ENCODE measurements at regions of chr2 and their contacts with region 1.

Region 1: GRCh38 chr2:11124503-11125068 is 30.7 kb upstream of the SLC66A3 start:
- DNase-seq: peak; percentile 92
- H3K4me3 ChIP-seq: no peak overlapping the region; a peak in 1 of 4 replicates
- H3K27ac ChIP-seq: no peak overlapping the region
- H3K4me1 ChIP-seq: peaks cover 0 to 2% of the 10 kb centered on the region in 2 experiments; a peak in 1 of 4 replicates
- H3K27me3 ChIP-seq: no peaks in the 10 kb centered on the region
- CTCF ChIP-seq: peak; percentile 97
- EP300 ChIP-seq: no peak
- RAD21 ChIP-seq: peak; percentile 95

Region 2: DNA sequence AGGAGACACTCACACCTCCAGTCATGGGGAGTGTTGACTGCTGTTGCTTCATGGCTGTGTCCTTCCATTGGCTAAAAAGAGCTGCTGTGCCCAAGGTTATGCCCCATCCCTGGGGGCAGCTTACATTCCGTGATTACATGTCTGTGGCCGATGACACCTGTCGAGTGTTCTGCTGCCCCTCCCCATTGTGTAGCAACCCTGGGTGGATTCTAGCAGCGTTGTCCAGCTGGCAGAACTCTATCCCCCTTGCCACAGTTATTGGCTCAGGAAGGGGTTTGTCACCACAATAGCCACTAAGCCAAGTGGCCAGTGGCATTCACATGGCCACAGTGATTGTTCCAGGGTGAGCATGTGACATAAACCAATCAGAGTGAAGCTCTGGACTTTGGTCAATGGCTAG is 300.4 kb before region 1 on chr2:
- CTCF ChIA-PET with region 1: interaction called, 666 read pairs
- POLR2A ChIA-PET with region 1: no interaction called
- DNase-seq: no peak
- H3K4me3 ChIP-seq: no peak overlapping the region
- H3K27ac ChIP-seq: no peak overlapping the region
- H3K4me1 ChIP-seq: peaks cover 0 to 5% of the 10 kb centered on the region in 2 experiments; a peak in 1 of 4 replicates
- H3K27me3 ChIP-seq: peaks cover 60% of the 10 kb centered on the region; the same call in 1 of the 2 replicates
- CTCF ChIP-seq: no peak
- EP300 ChIP-seq: no peak
- RAD21 ChIP-seq: no peak

Region 3: DNA sequence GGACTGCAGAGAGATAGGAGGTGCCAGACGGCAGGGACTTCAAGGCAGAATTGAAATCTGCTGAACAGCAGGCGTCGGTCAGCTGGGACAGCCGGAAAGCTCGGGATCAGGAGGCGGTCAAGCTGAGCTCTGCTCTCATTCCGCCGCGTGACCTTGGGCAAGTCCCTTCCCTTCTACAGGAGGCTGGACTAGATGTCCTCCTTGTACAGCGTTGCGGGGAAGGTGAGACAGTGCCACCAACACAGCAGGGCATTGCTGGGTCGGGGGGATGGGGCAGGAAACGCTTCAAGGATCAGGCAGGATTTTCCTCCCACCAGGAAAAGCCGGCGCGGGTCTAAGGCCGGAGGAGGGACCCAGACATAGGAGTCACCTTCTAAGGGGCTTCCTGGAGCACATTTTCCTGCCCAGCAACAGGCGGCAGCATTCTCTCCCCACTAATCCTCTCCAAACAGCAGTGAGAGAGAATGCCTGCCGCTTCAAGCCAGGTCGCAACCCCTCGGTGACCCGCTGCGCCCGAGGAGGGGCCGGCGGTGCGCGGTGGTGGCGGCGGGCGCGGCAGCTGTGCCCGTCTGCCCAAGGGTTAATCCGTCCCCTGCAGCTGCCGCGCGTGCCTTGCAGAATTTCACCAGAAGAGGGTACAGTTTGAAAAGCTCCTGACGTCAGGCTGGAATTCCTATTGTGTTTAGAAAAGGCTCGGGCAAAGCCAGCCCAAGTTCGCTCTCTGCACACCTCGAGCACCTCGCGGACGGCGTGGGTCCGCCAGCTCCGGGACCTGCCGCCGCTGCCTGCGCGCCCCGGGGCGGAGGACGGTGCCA is 213.1 kb before region 1 on chr2 and contains the start of gene KCNF1:
- CTCF ChIA-PET with region 1: interaction called, 94 read pairs
- POLR2A ChIA-PET with region 1: no interaction called
- DNase-seq: peak; percentile 90
- H3K4me3 ChIP-seq: peak within 1 kb of the TSS; percentile 51 to 63
- H3K27ac ChIP-seq: no peak within 1 kb of the TSS
- H3K4me1 ChIP-seq: peaks cover 0 to 12% of the 10 kb centered on the region in 2 experiments; a peak in 1 of 4 replicates
- H3K27me3 ChIP-seq: peaks cover 14% of the 10 kb centered on the region; the same call in 1 of the 2 replicates
- CTCF ChIP-seq: peak; percentile 56
- EP300 ChIP-seq: no peak
- RAD21 ChIP-seq: peak; percentile 41
- polyA plus RNA-seq, gene KCNF1: 0.16 and 0.23 TPM in 2 replicates

Region 4: GRCh38 chr2:10931710-10932255 is 192.8 kb before region 1 on chr2:
- CTCF ChIA-PET with region 1: interaction called, 16 read pairs
- POLR2A ChIA-PET with region 1: no interaction called
- DNase-seq: no peak
- H3K4me3 ChIP-seq: no peak overlapping the region
- H3K27ac ChIP-seq: no peak overlapping the region
- H3K4me1 ChIP-seq: peaks cover 14 to 37% of the 10 kb centered on the region in 2 experiments; a peak in 3 of 4 replicates
- H3K27me3 ChIP-seq: no peaks in the 10 kb centered on the region
- CTCF ChIP-seq: no peak
- EP300 ChIP-seq: no peak
- RAD21 ChIP-seq: no peak

Region 5: DNA sequence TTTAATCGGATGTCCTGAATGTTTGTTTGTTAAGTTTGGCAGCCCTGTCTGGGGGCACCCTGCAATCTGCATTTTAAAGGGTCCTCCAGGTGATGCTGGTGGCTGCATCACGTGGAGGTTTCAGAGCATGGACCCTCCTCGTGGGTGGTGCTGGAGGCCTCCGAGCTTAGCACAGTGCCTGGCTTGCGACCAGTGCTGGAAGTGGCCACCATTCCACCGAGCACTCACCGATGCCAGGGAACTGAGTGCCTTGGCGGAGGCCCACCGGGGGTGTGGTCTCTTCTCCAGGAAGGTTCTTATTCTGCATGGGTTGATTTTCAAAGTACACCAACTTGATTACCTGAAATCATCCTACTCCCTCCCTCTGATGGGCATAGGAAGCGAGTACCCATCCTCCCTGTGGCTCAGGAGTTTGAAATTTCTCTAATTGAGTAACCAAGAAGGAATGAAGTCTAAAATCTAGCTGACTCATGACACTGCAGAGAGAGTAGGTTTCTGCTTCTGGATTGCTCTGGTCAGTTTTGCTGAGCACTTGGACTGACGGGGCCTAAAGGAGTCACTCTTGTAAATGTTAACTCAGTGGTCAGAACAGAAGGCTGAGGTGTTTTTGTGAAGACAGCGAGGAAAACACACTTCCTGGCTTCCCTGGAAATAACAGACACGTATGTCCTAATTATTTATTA is 27.4 kb before region 1 on chr2:
- CTCF ChIA-PET with region 1: interaction called, 21 read pairs
- POLR2A ChIA-PET with region 1: no interaction called
- DNase-seq: no peak
- H3K4me3 ChIP-seq: no peak overlapping the region
- H3K27ac ChIP-seq: no peak overlapping the region
- H3K4me1 ChIP-seq: no peaks in the 10 kb centered on the region
- H3K27me3 ChIP-seq: no peaks in the 10 kb centered on the region; the same call in 1 of the 2 replicates
- CTCF ChIP-seq: no peak
- EP300 ChIP-seq: no peak
- RAD21 ChIP-seq: no peak

Region 6: DNA sequence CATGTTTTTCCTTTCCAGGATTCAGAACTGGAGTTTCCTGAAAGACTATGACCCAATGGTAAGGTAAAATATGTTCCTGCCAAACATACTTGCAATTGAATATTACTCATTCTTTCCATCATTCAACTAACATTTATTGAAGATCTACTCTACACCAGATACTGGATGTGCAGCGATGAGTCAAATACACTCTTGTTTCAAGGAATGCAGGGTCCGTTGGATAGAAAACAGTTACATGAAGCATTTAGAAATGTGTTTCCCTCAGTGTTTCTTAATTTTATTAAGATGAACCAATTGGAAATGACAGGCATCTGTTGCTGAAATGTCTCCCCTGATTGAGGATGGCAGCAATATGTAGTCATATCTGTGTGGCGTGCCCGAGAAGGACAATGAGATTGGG is 15.9 kb after region 1 on chr2:
- CTCF ChIA-PET with region 1: interaction called, 14 read pairs
- POLR2A ChIA-PET with region 1: no interaction called
- DNase-seq: no peak
- H3K4me3 ChIP-seq: no peak overlapping the region
- H3K27ac ChIP-seq: peak overlapping the region in 1 of 2 experiments; percentile 66; a peak in 2 of 4 replicates
- H3K4me1 ChIP-seq: no peaks in the 10 kb centered on the region
- H3K27me3 ChIP-seq: no peaks in the 10 kb centered on the region
- CTCF ChIP-seq: no peak
- EP300 ChIP-seq: peak in 1 of 2 experiments; percentile 85; a peak in 3 of 4 replicates
- RAD21 ChIP-seq: no peak

Measured in SK-N-SH (cell line).